ENCODE measurements at regions of chr1 and their contacts with region 1.

Region 1: GRCh38 chr1:174968750-174969244 is 30.9 kb upstream of the CACYBP start:
- DNase-seq: peak; percentile 77 to 82 (median 78)
- H3K4me3 ChIP-seq: peak overlapping the region in 1 of 2 donors; percentile 29
- H3K4me3 Mint-ChIP-seq: peak overlapping the region; percentile 65 to 84 (median 76)
- H3K27ac ChIP-seq: peak overlapping the region; percentile 59
- H3K27ac Mint-ChIP-seq: peak overlapping the region; percentile 93 to 99 (median 94)
- H3K4me1 ChIP-seq: peaks cover 84% of the 10 kb centered on the region
- H3K4me1 Mint-ChIP-seq: peaks cover 57 to 73% (median 67%) of the 10 kb centered on the region in 4 donors
- H3K27me3 ChIP-seq: no peaks in the 10 kb centered on the region
- H3K27me3 Mint-ChIP-seq: no peaks in the 10 kb centered on the region

Region 2: DNA sequence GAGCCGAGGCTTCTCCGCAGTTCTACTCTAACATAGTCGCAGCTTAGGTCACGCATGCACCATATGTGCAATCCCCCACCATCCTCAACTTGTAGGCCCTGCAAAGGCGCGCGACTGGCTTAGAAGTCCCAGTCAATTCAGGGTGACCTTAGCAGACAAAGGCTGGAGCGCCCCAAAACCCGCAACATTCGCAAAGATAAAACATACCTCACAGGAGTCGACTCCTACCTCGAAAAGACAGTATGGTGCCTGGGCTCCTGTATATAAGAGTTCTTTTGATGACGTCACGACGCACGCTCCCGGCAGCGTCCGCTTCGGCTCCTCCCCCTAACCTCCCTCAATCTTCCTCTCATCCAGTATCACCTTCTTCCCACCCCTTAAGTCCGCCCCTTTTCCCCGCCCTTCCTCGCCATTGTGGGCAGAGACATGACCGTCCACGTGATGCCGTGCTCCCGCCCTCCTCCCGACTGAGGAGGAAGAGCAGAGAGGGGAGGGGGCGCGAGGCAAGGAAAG is 1101.0 kb before region 1 on chr1 and contains the start of gene GAS5:
- CTCF ChIA-PET with region 1: no interaction called
- POLR2A ChIA-PET with region 1: interaction called, 6 read pairs
- intact Hi-C with region 1: loop called (anchors 10 kb)
- DNase-seq: peak; percentile 98 to 100 (median 99)
- H3K4me3 ChIP-seq: peak within 1 kb of the TSS; percentile 71 to 79
- H3K4me3 Mint-ChIP-seq: peak within 1 kb of the TSS; percentile 95 to 99 (median 96)
- H3K27ac ChIP-seq: peak within 1 kb of the TSS; percentile 89
- H3K27ac Mint-ChIP-seq: peak within 1 kb of the TSS; percentile 94 to 99 (median 97)
- H3K4me1 ChIP-seq: peaks cover 84% of the 10 kb centered on the region
- H3K4me1 Mint-ChIP-seq: peaks cover 52 to 92% (median 63%) of the 10 kb centered on the region in 4 donors
- H3K27me3 ChIP-seq: no peaks in the 10 kb centered on the region
- H3K27me3 Mint-ChIP-seq: no peaks in the 10 kb centered on the region
- total RNA-seq, gene GAS5: 676 to 709 TPM

Region 3: DNA sequence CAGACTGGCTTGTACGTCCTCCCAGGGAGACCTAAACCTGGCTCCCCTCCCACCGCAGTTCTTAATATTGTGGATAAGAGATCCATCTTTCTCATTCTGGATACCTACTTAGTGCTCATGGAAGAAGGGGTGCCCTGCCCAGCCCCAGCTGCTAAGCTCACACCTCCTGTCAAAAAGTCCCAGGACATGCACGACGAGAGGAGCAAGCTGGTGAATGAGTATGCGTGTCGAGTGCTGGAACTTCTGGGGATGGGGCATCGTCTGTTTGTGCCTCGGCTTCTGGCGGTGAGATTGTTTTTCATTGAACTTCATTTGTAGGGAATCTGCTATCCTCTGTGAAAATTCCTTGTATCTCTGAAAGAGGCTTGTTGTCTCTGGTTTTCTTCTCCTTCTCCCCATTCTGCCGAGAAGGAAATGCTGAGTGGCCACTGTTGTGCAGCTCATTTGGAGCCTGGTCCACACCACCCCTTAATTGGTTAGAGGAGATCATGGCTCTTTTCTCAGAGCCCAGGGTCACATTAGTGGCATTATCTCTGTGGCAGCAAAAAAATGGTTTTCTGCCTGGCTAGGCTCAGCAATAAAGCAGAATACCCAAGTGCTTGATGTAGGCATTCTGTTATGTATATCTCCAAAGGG is 168.5 kb before region 1 on chr1:
- CTCF ChIA-PET with region 1: interaction called, 13 read pairs
- POLR2A ChIA-PET with region 1: interaction called, 89 read pairs
- intact Hi-C with region 1: loop called (anchors 1 kb)
- DNase-seq: peak in 1 of 5 donors; percentile 47
- H3K4me3 ChIP-seq: peak overlapping the region; percentile 54 to 73
- H3K4me3 Mint-ChIP-seq: no peak overlapping the region
- H3K27ac ChIP-seq: peak overlapping the region; percentile 62
- H3K27ac Mint-ChIP-seq: no peak overlapping the region
- H3K4me1 ChIP-seq: peaks cover 24% of the 10 kb centered on the region
- H3K4me1 Mint-ChIP-seq: peaks cover 0 to 11% (median 9%) of the 10 kb centered on the region in 4 donors
- H3K27me3 ChIP-seq: no peaks in the 10 kb centered on the region
- H3K27me3 Mint-ChIP-seq: no peaks in the 10 kb centered on the region

Region 4: GRCh38 chr1:174912264-174912663 is 56.5 kb before region 1 on chr1:
- CTCF ChIA-PET with region 1: interaction called, 3 read pairs
- POLR2A ChIA-PET with region 1: interaction called, 5 read pairs
- intact Hi-C with region 1: loop called (anchors 5 kb)
- DNase-seq: no peak
- H3K4me3 ChIP-seq: no peak overlapping the region
- H3K4me3 Mint-ChIP-seq: no peak overlapping the region
- H3K27ac ChIP-seq: no peak overlapping the region
- H3K27ac Mint-ChIP-seq: peak overlapping the region in 4 of 7 donors; percentile 46 to 75 (median 66)
- H3K4me1 ChIP-seq: peaks cover 20% of the 10 kb centered on the region
- H3K4me1 Mint-ChIP-seq: peaks cover 34 to 53% (median 40%) of the 10 kb centered on the region in 4 donors
- H3K27me3 ChIP-seq: no peaks in the 10 kb centered on the region
- H3K27me3 Mint-ChIP-seq: no peaks in the 10 kb centered on the region

Region 5: DNA sequence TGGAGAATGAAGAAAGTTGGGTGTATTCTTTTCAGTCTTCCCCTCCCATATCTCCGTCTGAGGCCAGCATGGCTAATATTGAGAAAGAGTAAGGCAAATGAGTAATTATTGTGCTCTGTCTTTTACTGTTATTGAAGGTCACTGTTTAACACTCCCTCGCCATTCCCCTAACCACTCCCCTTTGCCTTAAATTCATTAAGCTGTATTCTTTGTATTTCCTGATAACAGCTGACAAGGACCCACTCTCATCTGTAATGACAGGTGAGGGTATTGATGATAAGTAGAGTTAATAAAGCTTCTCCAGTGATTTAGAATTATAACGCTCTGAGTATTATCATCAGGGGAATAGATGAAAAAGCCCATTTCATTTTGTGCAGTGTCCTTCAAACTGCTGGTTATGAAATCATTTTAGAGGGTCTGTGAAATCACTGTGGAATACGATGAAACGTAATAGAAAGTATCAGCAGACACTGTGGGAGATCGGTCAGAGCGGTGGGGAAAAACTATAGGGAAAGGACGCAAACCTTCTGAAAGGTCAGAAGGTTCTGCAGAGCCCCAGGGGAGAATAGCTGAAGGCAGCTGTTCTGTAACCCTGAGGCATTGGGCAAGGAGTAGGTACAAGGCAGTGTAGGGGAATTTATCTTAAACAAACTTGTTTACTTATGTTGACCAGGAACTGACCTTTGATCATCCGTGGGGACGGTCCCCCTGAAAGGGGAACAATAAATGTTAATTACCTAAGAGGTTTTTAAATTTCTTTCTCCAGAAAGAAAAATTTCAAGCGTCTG is 15.3 kb before region 1 on chr1:
- CTCF ChIA-PET with region 1: interaction called, 5 read pairs
- POLR2A ChIA-PET with region 1: interaction called, 14 read pairs
- intact Hi-C with region 1: loop called (anchors 1 kb)
- DNase-seq: no peak
- H3K4me3 ChIP-seq: no peak overlapping the region
- H3K4me3 Mint-ChIP-seq: peak overlapping the region in 1 of 8 donors; percentile 12
- H3K27ac ChIP-seq: no peak overlapping the region
- H3K27ac Mint-ChIP-seq: peak overlapping the region in 6 of 7 donors; percentile 35 to 55 (median 48)
- H3K4me1 ChIP-seq: peaks cover 35% of the 10 kb centered on the region
- H3K4me1 Mint-ChIP-seq: peaks cover 31 to 43% (median 38%) of the 10 kb centered on the region in 4 donors
- H3K27me3 ChIP-seq: no peaks in the 10 kb centered on the region
- H3K27me3 Mint-ChIP-seq: no peaks in the 10 kb centered on the region

Region 6: GRCh38 chr1:174990382-174990999 is 21.7 kb after region 1 on chr1:
- CTCF ChIA-PET with region 1: interaction called, 122 read pairs
- POLR2A ChIA-PET with region 1: interaction called, 243 read pairs
- intact Hi-C with region 1: no loop called
- DNase-seq: peak in 3 of 5 donors; percentile 35 to 43 (median 39)
- H3K4me3 ChIP-seq: peak overlapping the region; percentile 10 to 49
- H3K4me3 Mint-ChIP-seq: peak overlapping the region; percentile 83 to 91 (median 90)
- H3K27ac ChIP-seq: peak overlapping the region; percentile 77
- H3K27ac Mint-ChIP-seq: peak overlapping the region; percentile 94 to 98 (median 96)
- H3K4me1 ChIP-seq: peaks cover 15% of the 10 kb centered on the region
- H3K4me1 Mint-ChIP-seq: peaks cover 23 to 24% (median 24%) of the 10 kb centered on the region in 4 donors
- H3K27me3 ChIP-seq: no peaks in the 10 kb centered on the region
- H3K27me3 Mint-ChIP-seq: no peaks in the 10 kb centered on the region

Measured in CD4-positive, alpha-beta memory T cell (primary cell).